ENCODE measurements at regions of chr6 and their contacts with region 1.

Region 1: DNA sequence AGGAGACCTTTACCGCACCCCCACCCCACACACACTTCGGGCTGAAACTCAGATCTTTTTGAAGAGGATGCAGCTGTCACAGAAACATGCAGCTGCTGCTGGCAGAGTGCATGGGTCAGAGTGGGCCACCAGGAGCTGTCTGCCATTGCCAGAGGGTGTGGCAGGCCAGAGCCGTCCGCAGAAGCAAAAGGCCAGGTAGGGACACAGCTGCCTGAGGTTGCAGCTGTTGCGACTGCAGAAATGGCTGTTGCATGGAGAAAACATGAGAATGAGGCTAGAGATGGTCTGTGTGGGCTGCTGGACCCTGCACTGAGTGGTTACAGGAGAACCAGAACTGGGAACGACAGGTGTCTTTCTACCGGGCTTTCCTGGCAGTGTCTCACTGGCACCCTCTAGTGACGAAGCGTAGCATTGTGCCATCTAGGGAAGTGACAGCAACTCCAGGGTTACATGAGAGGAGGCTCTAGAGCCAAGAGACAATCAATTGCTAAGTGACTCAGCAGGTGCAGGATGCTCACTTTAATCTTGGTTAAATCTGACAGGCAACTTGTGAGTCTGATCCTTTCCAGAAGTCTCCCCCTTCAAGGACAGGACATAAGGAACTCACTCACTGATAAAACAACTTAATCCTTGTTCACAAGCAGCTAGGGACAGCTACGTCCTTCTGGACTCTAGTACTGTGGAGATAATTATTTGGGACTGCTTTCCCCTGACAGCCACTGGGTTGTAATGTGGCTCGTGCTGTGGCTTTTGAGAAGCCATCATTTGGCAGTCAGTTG is 29.1 kb upstream of the SERPINB9 start:
- DNase-seq: peak; percentile 75
- H3K4me3 ChIP-seq: no peak overlapping the region
- H3K27ac ChIP-seq: no peak overlapping the region
- H3K4me1 ChIP-seq: no peaks in the 10 kb centered on the region
- H3K27me3 ChIP-seq: no peaks in the 10 kb centered on the region
- CTCF ChIP-seq: peak; percentile 65 to 91 (median 87)
- POLR2A ChIP-seq: no peak

Region 2: DNA sequence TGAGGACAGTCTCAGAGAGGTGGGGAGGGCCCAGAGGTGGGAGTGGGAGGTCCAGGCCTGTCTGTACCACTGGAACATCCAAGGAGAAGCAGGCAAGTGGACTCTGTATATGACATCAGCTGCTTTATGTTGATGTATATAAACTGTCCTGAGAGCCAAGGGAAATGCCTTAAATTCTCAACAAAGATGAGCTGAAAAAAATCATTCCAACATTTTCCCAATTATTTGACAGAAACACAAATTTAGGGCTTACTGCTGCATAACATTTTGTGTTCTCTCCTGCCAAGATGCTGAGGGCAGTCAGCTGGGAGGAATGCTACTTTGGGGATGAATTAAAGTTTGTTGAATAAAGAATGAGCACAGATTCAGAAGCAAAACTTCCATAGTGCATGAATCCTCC is 1269.6 kb before region 1 on chr6:
- intact Hi-C with region 1: no loop called
- DNase-seq: no peak
- H3K4me3 ChIP-seq: no peak overlapping the region
- H3K27ac ChIP-seq: no peak overlapping the region
- H3K4me1 ChIP-seq: no peaks in the 10 kb centered on the region
- H3K27me3 ChIP-seq: no peaks in the 10 kb centered on the region
- CTCF ChIP-seq: no peak
- POLR2A ChIP-seq: no peak

Region 3: DNA sequence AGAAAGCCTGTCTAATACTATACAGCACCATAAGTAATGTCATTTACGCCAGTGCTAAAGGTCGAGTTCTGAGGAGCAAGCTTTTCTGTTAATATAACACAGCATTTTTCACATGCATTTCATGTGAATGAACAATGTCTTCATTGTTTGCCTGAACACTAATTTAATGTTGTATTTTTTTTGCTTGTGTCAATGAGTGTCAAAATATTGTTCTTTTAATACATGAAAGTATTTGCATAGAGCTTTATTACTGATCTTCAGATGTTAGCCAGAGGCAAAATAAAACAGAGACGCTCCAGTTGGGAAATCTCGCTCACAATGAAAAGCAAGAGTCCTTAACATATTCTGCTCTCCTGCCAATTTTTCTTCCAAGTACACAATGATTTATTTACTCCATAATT is 1170.7 kb before region 1 on chr6:
- intact Hi-C with region 1: no loop called
- DNase-seq: no peak
- H3K4me3 ChIP-seq: no peak overlapping the region
- H3K27ac ChIP-seq: peak overlapping the region in 1 of 2 donors; percentile 62
- H3K4me1 ChIP-seq: no peaks in the 10 kb centered on the region
- H3K27me3 ChIP-seq: no peaks in the 10 kb centered on the region
- CTCF ChIP-seq: no peak
- POLR2A ChIP-seq: no peak

Region 4: GRCh38 chr6:2841264-2842138 is 90.7 kb before region 1 on chr6 and contains the start of gene SERPINB1:
- intact Hi-C with region 1: loop called (anchors 10 kb)
- DNase-seq: peak; percentile 78
- H3K4me3 ChIP-seq: peak within 1 kb of the TSS; percentile 52 to 91 (median 72)
- H3K27ac ChIP-seq: peak within 1 kb of the TSS; percentile 98 to 100
- H3K4me1 ChIP-seq: peaks cover 12 to 30% of the 10 kb centered on the region in 2 donors
- H3K27me3 ChIP-seq: no peaks in the 10 kb centered on the region
- CTCF ChIP-seq: no peak
- POLR2A ChIP-seq: no peak
- total RNA-seq, gene SERPINB1: 35.1 to 53.6 (median 51.8) TPM